ENCODE measurements at regions of chr9 and their contacts with region 1.

Region 1: DNA sequence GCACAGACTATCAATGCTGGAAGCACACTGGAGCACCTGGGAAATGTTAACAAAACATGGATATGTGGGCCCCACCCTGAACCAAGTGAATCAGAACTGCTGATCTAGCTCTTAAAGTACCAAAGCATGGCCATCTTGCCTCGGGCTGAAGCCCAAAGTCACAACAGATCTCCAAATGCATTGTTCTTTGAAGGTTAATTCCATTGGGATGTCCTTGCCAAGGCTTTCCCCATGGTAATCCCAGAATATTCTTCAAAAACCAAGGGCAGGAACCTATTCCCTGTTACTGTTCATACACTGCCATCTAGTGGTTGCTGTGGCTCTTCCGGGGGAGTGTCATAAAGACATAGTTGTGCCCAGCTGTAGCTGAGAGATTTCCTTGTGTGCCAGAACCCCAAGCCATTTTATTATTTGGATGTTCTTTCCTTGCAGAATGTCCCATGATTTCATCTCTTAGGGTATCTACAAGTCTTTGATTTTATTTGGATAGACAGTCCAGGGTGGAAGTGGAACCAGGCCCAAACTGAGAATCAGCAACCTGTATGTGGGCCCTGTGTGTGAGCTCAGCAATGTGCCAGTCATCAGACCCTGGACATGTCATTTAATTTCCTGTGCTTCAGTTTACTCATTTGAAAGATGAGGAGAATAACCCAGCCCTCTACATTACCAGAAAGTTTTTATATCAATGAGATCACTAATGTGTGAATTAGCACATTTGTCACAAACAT is 290.0 kb downstream of the ACTL7B start:
- DNase-seq: peak; percentile 79
- H3K4me3 ChIP-seq: no peak overlapping the region
- H3K27ac ChIP-seq: no peak overlapping the region
- H3K4me1 ChIP-seq: peaks cover 39% of the 10 kb centered on the region
- H3K27me3 ChIP-seq: no peaks in the 10 kb centered on the region
- CTCF ChIP-seq: peak; percentile 80 to 88

Region 2: GRCh38 chr9:107465467-107466451 is 1100.1 kb before region 1 on chr9:
- CTCF ChIA-PET with region 1: no interaction called
- dilution Hi-C with region 1: no loop called
- in situ Hi-C with region 1: loop called in 1 of 2 experiments (anchors 10 kb)
- intact Hi-C with region 1: loop called (anchors 1 kb)
- DNase-seq: peak; percentile 50
- H3K4me3 ChIP-seq: peak overlapping the region; percentile 51 to 71 (median 59)
- H3K27ac ChIP-seq: no peak overlapping the region
- H3K4me1 ChIP-seq: peaks cover 11% of the 10 kb centered on the region
- H3K27me3 ChIP-seq: no peaks in the 10 kb centered on the region
- CTCF ChIP-seq: peak; percentile 63 to 83

Region 3: GRCh38 chr9:108053555-108054061 is 512.2 kb before region 1 on chr9:
- CTCF ChIA-PET with region 1: no interaction called
- dilution Hi-C with region 1: no loop called
- in situ Hi-C with region 1: no loop called
- intact Hi-C with region 1: loop called (anchors 2 kb)
- DNase-seq: peak; percentile 76
- H3K4me3 ChIP-seq: no peak overlapping the region
- H3K27ac ChIP-seq: peak overlapping the region; percentile 79
- H3K4me1 ChIP-seq: peaks cover 76% of the 10 kb centered on the region
- H3K27me3 ChIP-seq: no peaks in the 10 kb centered on the region
- CTCF ChIP-seq: no peak

Region 4: DNA sequence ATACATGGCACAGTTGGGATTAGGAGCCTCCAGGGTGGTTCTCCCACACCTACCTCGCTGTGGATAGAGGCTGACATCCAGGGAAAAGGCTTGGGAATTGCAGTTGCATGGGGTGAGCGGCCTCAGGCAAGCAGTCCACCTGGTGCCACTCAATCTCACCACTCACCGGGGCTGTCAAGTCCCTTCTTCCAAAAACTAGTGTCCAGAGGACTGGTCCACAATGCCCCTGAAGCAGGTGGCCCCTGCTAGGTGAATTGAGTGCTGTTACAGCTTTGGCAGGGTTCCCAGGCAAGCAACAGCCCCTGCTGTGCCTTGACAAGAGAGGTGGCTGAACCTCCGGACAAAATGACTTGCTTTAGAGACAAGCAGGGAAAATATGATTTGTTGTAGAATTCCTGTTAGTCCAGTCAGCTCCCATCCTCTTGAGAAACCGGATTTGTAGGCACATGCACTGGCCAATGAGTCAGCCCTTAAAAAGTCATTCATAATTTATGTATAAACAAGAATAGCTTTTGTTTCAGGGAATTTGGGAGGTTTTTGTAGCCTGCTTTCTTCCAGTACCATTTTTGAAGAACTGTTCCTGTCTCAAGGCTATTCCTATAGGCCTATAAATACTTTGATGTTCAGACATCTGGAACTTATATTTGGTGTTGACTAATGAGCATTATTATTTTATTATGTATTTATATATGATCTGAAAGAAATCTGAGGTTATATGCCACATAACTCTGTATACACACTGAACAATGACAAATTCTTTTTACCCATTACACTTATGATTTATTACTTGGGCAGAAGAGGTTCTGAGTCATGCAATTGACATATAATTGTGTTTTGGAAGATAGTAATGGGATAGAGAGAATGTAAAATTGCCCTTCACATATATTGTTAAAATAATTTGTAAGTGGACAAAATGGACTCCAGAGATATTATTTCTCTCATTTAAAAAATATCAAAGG is 121.1 kb before region 1 on chr9:
- CTCF ChIA-PET with region 1: no interaction called
- dilution Hi-C with region 1: no loop called
- in situ Hi-C with region 1: no loop called
- intact Hi-C with region 1: loop called (anchors 1 kb)
- DNase-seq: peak; percentile 91
- H3K4me3 ChIP-seq: peak overlapping the region; percentile 3 to 42 (median 38)
- H3K27ac ChIP-seq: peak overlapping the region; percentile 84
- H3K4me1 ChIP-seq: peaks cover 37% of the 10 kb centered on the region
- H3K27me3 ChIP-seq: no peaks in the 10 kb centered on the region
- CTCF ChIP-seq: no peak

Region 5: GRCh38 chr9:108551030-108551838 is 14.6 kb before region 1 on chr9:
- CTCF ChIA-PET with region 1: no interaction called
- dilution Hi-C with region 1: no loop called
- in situ Hi-C with region 1: no loop called
- intact Hi-C with region 1: loop called (anchors 1 kb)
- DNase-seq: peak; percentile 98
- H3K4me3 ChIP-seq: peak overlapping the region in 1 of 3 experiments; percentile 9
- H3K27ac ChIP-seq: peak overlapping the region; percentile 99
- H3K4me1 ChIP-seq: peaks cover 60% of the 10 kb centered on the region
- H3K27me3 ChIP-seq: no peaks in the 10 kb centered on the region
- CTCF ChIP-seq: peak in 1 of 2 donors; percentile 10

Region 6: DNA sequence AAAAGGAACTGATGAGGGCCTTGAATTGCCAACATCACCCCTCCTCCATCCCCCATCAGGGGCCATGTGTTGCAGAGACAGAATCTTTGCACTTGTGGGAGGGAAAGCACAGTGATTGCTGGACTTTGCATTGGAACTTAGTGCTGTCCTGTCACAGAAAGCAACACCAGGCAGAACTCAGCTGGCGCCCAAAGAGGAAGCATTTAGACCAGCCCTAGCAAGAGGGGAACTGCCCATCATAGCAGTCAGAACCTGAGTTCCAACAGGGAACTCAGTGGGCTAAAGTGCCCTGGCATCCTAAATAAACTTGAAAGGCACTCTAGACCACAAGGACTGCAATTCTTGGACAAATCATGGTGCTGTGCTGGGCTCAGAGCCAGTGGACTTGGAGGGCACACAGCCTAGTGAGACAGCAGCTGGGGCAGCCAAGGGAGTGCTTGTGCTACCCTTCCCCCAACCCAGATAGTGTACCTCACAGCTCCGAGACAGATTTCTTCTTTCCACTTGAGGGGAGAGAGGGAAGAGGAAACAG is 161.8 kb after region 1 on chr9:
- CTCF ChIA-PET with region 1: no interaction called
- dilution Hi-C with region 1: no loop called
- in situ Hi-C with region 1: no loop called
- intact Hi-C with region 1: no loop called
- DNase-seq: no peak
- H3K4me3 ChIP-seq: no peak overlapping the region
- H3K27ac ChIP-seq: no peak overlapping the region
- H3K4me1 ChIP-seq: no peaks in the 10 kb centered on the region
- H3K27me3 ChIP-seq: no peaks in the 10 kb centered on the region
- CTCF ChIP-seq: no peak

Region 7: DNA sequence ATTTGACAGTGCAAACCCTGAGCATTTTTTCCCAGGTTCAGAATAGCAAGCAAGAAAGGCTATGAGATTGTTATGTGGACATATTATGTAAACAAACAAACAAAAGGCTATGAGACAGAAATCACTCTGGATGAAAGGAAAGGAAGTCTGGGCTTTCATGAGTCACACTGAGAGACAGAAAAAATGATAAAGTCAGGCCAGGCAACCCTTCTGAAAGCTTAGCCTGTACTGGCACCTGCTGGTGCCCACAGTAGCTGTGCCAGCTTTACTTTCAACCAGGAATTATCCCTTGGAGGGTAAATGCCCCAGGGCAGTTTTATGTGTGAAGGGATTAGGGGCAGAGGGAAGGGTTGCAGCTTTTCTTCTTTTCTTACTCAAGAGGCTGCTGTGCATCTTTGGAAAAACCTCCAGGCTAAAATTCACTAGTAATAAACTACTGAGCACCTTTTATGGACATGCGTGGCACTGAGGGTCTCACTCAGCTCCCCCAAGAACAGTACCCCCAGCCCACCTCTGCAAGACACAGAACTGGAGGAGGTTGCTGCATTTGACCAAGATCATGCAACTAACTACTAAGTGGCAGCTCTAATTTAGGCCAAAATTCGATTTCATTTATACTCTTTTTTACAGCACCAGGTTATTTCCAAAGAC is 248.3 kb after region 1 on chr9:
- CTCF ChIA-PET with region 1: no interaction called
- dilution Hi-C with region 1: no loop called
- in situ Hi-C with region 1: no loop called
- intact Hi-C with region 1: loop called (anchors 2 kb)
- DNase-seq: peak; percentile 71
- H3K4me3 ChIP-seq: no peak overlapping the region
- H3K27ac ChIP-seq: no peak overlapping the region
- H3K4me1 ChIP-seq: peaks cover 14% of the 10 kb centered on the region
- H3K27me3 ChIP-seq: no peaks in the 10 kb centered on the region
- CTCF ChIP-seq: peak; percentile 84 to 85